ENCODE measurements at regions of chr3 and their contacts with region 1.

Region 1: GRCh38 chr3:177158461-177158860 is 38.8 kb downstream of the TBL1XR1 start:
- DNase-seq: no peak
- ATAC-seq: no peak
- H3K4me3 ChIP-seq: no peak overlapping the region
- H3K27ac ChIP-seq: no peak overlapping the region
- H3K4me1 ChIP-seq: peaks cover 1 to 4% of the 10 kb centered on the region in 2 experiments; a peak in 3 of 5 replicates
- H3K27me3 ChIP-seq: no peaks in the 10 kb centered on the region
- CTCF ChIP-seq: no peak
- EP300 ChIP-seq: no peak
- POLR2A ChIP-seq: 0 out of 2 replicates have a peak, but pooled peaks have one; percentile 16
- RAD21 ChIP-seq: no peak

Region 2: DNA sequence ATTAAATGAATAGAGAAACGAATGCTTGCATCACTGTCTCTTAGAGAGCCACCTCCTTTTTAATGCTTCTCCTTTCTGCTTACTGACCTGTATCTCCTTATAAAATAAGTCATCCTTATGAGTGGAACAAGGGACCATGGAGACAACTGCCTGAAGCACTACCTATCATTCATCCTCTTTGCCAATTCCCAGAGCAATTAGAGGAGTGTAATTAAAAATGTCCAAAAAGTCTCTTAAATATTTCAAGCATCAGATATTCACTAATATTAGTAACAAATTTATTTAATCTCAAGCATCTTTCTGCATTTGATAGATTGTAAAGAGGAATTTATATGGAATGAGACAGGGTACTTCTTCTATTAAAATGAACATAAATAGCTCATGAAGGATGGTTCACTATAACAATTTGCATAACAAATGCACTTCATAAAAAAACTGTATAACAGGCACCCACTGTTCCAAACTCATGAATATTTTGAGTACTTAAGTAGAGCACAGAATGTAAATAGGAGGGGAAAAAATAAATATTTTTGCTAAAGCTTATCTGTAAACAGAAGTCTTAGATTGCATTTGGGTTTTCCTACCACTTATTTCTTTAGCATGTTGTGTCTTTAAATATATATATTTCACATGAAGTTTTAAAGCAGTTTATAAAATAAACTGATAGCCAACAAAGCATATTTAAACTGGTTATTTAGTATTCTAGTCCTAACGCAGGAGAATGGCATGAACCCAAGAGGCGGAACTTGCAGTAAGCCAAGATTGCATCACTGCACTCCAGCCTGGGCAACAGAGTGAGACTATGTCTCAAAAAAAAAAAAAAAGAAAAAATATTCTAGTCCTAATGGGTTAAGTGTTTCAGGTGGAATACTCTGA is 230.5 kb before region 1 on chr3:
- CTCF ChIA-PET with region 1: no interaction called
- POLR2A ChIA-PET with region 1: no interaction called
- in situ Hi-C with region 1: no loop called
- intact Hi-C with region 1: no loop called
- DNase-seq: no peak
- ATAC-seq: no peak
- H3K4me3 ChIP-seq: no peak overlapping the region
- H3K27ac ChIP-seq: no peak overlapping the region
- H3K4me1 ChIP-seq: no peaks in the 10 kb centered on the region
- H3K27me3 ChIP-seq: no peaks in the 10 kb centered on the region; a peak in 1 of 5 replicates
- CTCF ChIP-seq: no peak
- EP300 ChIP-seq: no peak
- POLR2A ChIP-seq: no peak
- RAD21 ChIP-seq: no peak

Region 3: DNA sequence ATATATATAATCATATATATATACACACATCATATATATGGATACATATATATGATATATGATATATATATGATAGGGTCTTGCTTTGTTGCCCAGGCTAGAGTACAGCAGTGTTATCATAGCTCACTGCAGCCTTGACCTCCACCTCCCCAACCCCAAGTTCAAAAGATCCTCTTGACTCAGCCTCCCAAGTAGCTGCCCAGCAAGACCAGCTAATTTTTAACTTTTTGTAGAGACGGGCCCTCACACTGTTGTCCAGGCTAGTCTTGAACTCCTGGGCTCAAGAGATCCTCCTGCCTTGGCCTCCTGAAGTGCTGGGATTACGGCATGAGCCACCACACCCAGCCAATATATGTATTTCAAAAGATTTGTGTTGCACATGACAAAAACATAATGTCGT is 44.2 kb before region 1 on chr3:
- CTCF ChIA-PET with region 1: no interaction called
- POLR2A ChIA-PET with region 1: no interaction called
- in situ Hi-C with region 1: no loop called
- intact Hi-C with region 1: no loop called
- DNase-seq: no peak
- ATAC-seq: no peak
- H3K4me3 ChIP-seq: no peak overlapping the region
- H3K27ac ChIP-seq: no peak overlapping the region
- H3K4me1 ChIP-seq: peaks cover 6 to 12% of the 10 kb centered on the region in 2 experiments; a peak in 2 of 5 replicates
- H3K27me3 ChIP-seq: no peaks in the 10 kb centered on the region
- CTCF ChIP-seq: no peak
- EP300 ChIP-seq: no peak
- POLR2A ChIP-seq: no peak
- RAD21 ChIP-seq: no peak

Region 4: GRCh38 chr3:177179281-177180067 is 21.0 kb after region 1 on chr3:
- CTCF ChIA-PET with region 1: no interaction called
- POLR2A ChIA-PET with region 1: interaction called, 11 read pairs
- in situ Hi-C with region 1: no loop called
- intact Hi-C with region 1: no loop called
- DNase-seq: peak in 1 of 4 experiments; percentile 39
- ATAC-seq: peak; percentile 11
- H3K4me3 ChIP-seq: no peak overlapping the region; the same call in 1 of the 2 replicates
- H3K27ac ChIP-seq: peak overlapping the region; percentile 51
- H3K4me1 ChIP-seq: peaks cover 28 to 34% of the 10 kb centered on the region in 2 experiments; a peak in 4 of 5 replicates
- H3K27me3 ChIP-seq: no peaks in the 10 kb centered on the region
- CTCF ChIP-seq: no peak
- EP300 ChIP-seq: no peak
- POLR2A ChIP-seq: no peak
- RAD21 ChIP-seq: no peak